Heart left ventricle (tissue), 16 donors: ENCODE measurements at regions of chr12 and their contacts with region 1.

Region 1: GRCh38 chr12:121793838-121794533 is 498 bp upstream of the RHOF start:
- DNase-seq: peak; percentile 88 to 96 (median 94)
- ATAC-seq: peak; percentile 42 to 67 (median 62)
- H3K4me3 ChIP-seq: peak overlapping the region; percentile 37 to 75 (median 56)
- H3K27ac ChIP-seq: peak overlapping the region in 11 of 12 donors; percentile 61 to 100 (median 100)
- H3K4me1 ChIP-seq: peaks cover 17 to 88% (median 65%) of the 10 kb centered on the region in 12 donors
- H3K27me3 ChIP-seq: no peaks in the 10 kb centered on the region
- CTCF ChIP-seq: peak; percentile 98 to 100 (median 99)
- POLR2A ChIP-seq: no peak

Region 2: GRCh38 chr12:121697098-121697698 is 96.8 kb before region 1 on chr12:
- intact Hi-C with region 1: loop called (anchors 1 to 5 kb)
- DNase-seq: no peak
- ATAC-seq: no peak
- H3K4me3 ChIP-seq: no peak overlapping the region
- H3K27ac ChIP-seq: no peak overlapping the region
- H3K4me1 ChIP-seq: peaks cover 0 to 5% (median 0%) of the 10 kb centered on the region in 12 donors
- H3K27me3 ChIP-seq: no peaks in the 10 kb centered on the region
- CTCF ChIP-seq: peak; percentile 41 to 70 (median 60)
- POLR2A ChIP-seq: no peak

Region 3: GRCh38 chr12:121741743-121742142 is 52.2 kb before region 1 on chr12:
- intact Hi-C with region 1: no loop called
- DNase-seq: no peak
- ATAC-seq: no peak
- H3K4me3 ChIP-seq: no peak overlapping the region
- H3K27ac ChIP-seq: no peak overlapping the region
- H3K4me1 ChIP-seq: peaks cover 0 to 5% (median 0%) of the 10 kb centered on the region in 12 donors
- H3K27me3 ChIP-seq: no peaks in the 10 kb centered on the region
- CTCF ChIP-seq: no peak
- POLR2A ChIP-seq: no peak

Region 4: GRCh38 chr12:121773011-121773777 is 20.8 kb before region 1 on chr12:
- intact Hi-C with region 1: loop called in 5 of 10 experiments (anchors 1 to 2 kb)
- DNase-seq: peak in 4 of 5 donors; percentile 66 to 87 (median 73)
- ATAC-seq: peak; percentile 58 to 72 (median 67)
- H3K4me3 ChIP-seq: peak overlapping the region in 1 of 12 donors; percentile 8
- H3K27ac ChIP-seq: peak overlapping the region in 10 of 12 donors; percentile 28 to 76 (median 68)
- H3K4me1 ChIP-seq: peaks cover 0 to 62% (median 21%) of the 10 kb centered on the region in 12 donors
- H3K27me3 ChIP-seq: no peaks in the 10 kb centered on the region
- CTCF ChIP-seq: peak; percentile 64 to 82 (median 75)
- POLR2A ChIP-seq: no peak

Region 5: GRCh38 chr12:121811434-121812319 is 17.7 kb after region 1 on chr12:
- intact Hi-C with region 1: loop called (anchors 1 to 2 kb)
- DNase-seq: peak; percentile 69 to 88 (median 76)
- ATAC-seq: peak in 3 of 4 donors; percentile 84 to 87 (median 87)
- H3K4me3 ChIP-seq: peak overlapping the region; percentile 20 to 76 (median 58)
- H3K27ac ChIP-seq: peak overlapping the region in 11 of 12 donors; percentile 23 to 82 (median 64)
- H3K4me1 ChIP-seq: peaks cover 3 to 54% (median 41%) of the 10 kb centered on the region in 12 donors
- H3K27me3 ChIP-seq: no peaks in the 10 kb centered on the region
- CTCF ChIP-seq: peak; percentile 97 to 100 (median 100)
- POLR2A ChIP-seq: no peak

Region 6: DNA sequence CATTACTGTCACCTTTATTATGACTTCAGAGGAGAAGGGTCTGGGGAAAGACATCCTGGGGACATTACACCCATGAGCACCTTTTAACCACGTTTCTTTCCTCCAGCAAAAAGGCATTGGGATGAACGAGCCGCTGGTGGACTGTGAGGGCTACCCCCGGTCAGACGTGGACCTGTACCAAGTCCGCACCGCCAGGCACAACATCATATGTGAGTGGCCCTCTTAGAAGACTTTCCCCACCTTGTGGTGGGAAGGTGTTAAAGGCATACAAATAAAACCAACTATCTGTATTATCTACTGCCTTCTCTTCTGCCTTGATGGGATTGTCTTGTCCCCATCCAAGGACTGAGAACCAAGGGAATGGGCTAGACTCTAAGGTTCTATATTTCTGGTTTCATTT is 100.6 kb after region 1 on chr12:
- intact Hi-C with region 1: loop called in 8 of 10 experiments (anchors 2 to 5 kb)
- DNase-seq: no peak
- ATAC-seq: no peak
- H3K4me3 ChIP-seq: no peak overlapping the region
- H3K27ac ChIP-seq: no peak overlapping the region
- H3K4me1 ChIP-seq: peaks cover under 1 to 25% (median 13%) of the 10 kb centered on the region in 12 donors
- H3K27me3 ChIP-seq: no peaks in the 10 kb centered on the region
- CTCF ChIP-seq: peak in 1 of 12 donors; percentile 6
- POLR2A ChIP-seq: no peak